Psoas muscle (tissue), 8 donors: ENCODE measurements at regions of chr2 and their contacts with region 1.

Region 1: DNA sequence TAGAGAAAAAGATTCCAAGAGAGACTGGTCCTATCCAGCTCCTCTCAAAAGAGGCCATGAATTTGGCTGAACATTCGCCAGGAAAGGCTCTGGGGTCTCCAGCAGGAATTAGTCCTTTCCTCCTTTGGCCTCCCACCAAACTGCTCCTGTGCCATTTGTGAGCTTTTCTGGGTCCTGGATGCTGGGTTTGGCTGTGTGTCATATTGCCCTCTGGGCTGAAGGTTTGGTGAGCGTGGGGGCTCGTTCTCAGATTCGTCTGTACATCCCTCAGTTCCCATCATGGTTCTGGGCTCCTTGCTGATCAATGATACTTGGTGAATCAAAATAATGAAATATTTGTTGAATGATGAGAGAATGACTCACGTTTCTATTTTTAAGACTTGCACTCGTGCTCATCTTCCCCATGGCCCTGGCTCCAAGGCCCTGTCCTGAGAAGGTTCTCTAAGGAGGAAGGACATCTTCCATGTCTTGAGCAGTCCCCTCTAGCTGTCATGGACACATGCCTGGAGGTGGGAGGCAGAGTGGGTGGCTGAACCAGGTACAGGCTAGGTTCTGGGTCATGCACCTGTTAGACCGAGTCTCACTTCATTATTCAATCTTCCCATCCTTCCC is 47.8 kb upstream of the RHOB start:
- DNase-seq: no peak
- ATAC-seq: no peak
- H3K4me3 ChIP-seq: no peak overlapping the region
- H3K27ac ChIP-seq: no peak overlapping the region
- H3K4me1 ChIP-seq: no peaks in the 10 kb centered on the region
- H3K27me3 ChIP-seq: no peaks in the 10 kb centered on the region
- CTCF ChIP-seq: no peak

Region 2: DNA sequence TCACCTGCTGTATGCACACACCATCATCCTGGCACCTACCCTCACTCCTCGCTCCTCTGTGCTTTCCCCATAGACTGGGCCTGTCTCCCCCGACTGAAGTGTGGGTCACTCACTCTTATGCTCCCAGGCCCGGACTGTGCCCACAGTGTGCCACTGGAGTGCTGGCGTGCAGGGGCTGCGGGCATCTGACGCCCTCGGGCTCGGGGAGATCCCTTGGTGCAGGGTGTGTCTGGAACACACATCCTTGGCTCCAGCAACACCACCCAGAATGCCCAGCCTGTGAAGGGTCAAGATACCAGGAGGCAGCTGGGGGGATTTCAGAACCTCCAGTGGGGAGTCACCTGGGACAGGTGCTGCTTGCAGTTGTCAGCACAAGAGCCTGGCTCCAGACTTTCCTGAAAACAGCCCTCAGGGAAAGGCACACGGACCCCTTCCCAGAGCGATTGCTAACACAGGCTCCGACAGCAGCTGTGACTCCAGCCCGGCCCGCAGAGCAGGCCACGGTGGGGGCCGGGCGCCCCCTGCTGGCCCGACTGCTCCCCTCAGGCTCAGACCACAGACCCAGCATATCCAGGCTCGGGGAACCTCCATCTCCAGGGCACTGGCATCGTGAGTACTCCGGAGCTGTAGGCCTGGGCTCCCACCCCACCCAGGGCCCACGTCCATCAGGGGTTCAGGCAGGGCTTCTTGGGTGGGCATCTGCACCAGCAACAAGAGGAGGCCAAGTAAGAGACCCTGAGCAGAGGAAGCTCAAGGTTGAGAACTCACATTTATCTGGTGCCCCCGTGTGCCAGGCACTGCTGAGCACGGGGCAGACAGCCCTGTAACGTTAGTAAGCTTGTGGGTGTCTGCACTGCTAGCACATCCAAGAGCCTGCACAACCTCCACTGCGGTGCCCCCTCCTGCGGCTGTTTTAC is 243.3 kb after region 1 on chr2:
- intact Hi-C with region 1: loop called in 1 of 2 experiments (anchors 5 kb)
- DNase-seq: peak; percentile 83 to 89
- ATAC-seq: peak; percentile 92 to 98 (median 94)
- H3K4me3 ChIP-seq: no peak overlapping the region
- H3K27ac ChIP-seq: peak overlapping the region; percentile 46
- H3K4me1 ChIP-seq: peaks cover 3% of the 10 kb centered on the region
- H3K27me3 ChIP-seq: no peaks in the 10 kb centered on the region
- CTCF ChIP-seq: peak; percentile 95